ENCODE measurements at regions of chr14 and their contacts with region 1.

Region 1: GRCh38 chr14:93115069-93115820 is 480 bp downstream of the ITPK1 start:
- DNase-seq: peak; percentile 87 to 95
- H3K4me3 ChIP-seq: peak overlapping the region; percentile 48
- H3K4me3 Mint-ChIP-seq: peak overlapping the region; percentile 85
- H3K27ac Mint-ChIP-seq: no peak overlapping the region
- H3K4me1 ChIP-seq: peaks cover 14% of the 10 kb centered on the region
- H3K4me1 Mint-ChIP-seq: peaks cover 16% of the 10 kb centered on the region
- H3K27me3 ChIP-seq: no peaks in the 10 kb centered on the region
- H3K27me3 Mint-ChIP-seq: no peaks in the 10 kb centered on the region
- CTCF ChIP-seq: no peak

Region 2: DNA sequence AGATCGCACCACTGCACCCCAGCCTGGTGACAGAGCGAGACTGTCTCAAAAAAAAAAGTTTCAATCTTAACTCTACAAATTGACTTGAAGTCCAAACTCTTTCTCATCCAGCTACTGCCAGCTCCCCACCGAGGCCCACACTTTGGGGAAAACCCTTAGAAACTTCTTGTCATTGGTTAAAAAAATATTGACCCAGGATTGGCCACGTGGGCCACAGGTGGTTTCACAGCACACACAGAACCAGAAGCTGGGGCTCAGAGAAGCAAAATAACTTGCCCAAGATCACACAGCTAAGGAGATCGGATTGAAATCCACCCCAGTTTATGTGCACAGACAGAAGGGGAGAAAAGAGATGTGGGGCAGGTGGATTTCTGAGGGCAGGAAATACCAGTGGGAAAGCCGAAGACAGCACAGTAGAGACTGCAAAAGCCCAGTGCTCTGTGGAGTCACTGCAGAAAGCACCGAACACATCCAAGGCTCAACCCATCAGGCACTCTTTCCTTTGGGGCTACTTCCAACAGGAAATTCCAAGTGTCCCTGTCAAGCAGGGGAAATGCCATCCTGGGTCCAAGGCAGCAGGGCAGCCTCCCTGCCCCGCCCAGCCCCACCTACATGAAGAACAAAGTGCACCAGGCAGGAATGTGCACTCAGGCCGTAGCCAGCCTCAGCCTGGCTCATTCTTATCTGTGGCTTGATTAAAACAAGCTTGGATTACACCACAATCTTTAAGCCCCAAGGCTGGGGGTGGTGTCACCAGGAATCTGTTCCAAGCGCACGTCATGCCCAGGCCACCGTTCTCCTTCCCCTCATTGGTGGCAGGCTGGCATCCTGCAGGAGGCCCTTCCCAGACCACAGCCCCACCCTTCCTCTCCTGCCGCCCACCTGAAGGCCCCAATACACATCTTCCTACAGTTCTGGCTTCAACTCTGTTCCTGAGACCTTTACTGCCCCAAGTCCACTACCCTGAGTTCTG is 72.0 kb before region 1 on chr14:
- CTCF ChIA-PET with region 1: interaction called, 5 read pairs
- POLR2A ChIA-PET with region 1: interaction called, 10 read pairs
- intact Hi-C with region 1: no loop called
- DNase-seq: peak; percentile 93 to 97
- H3K4me3 ChIP-seq: no peak overlapping the region
- H3K4me3 Mint-ChIP-seq: peak overlapping the region; percentile 54
- H3K27ac Mint-ChIP-seq: peak overlapping the region; percentile 90
- H3K4me1 ChIP-seq: peaks cover 80% of the 10 kb centered on the region
- H3K4me1 Mint-ChIP-seq: peaks cover 49% of the 10 kb centered on the region
- H3K27me3 ChIP-seq: no peaks in the 10 kb centered on the region
- H3K27me3 Mint-ChIP-seq: no peaks in the 10 kb centered on the region
- CTCF ChIP-seq: no peak

Region 3: DNA sequence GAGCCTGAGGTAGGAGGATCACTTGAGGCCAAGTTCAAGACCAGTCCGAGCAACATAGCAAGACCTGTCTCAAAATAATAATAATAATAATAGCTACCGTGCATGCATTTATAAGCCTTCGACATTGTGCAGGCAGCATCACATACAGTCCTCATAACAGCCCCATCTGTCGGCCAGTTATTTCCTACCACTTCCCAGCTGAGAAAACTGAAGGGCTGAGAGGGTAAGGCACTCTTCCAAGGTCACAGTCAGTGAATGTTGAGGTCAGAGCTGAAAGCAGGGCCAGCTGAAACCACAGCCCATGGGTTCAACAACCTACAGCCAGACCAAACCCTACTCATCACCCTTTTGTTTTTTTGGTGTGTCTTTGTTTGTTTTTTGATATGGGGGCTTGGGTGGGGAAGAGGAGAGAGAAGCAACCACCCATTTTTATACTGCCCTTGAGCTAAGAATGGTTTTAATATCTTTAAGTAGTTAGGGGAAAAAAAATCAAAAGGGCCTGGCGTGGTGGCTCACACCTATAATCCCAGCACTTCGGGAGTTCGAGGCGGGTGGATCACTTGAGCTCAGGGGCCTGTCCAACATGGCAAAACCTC is 17.3 kb after region 1 on chr14:
- CTCF ChIA-PET with region 1: interaction called, 20 read pairs
- POLR2A ChIA-PET with region 1: no interaction called
- intact Hi-C with region 1: no loop called
- DNase-seq: no peak
- H3K4me3 ChIP-seq: no peak overlapping the region
- H3K4me3 Mint-ChIP-seq: no peak overlapping the region
- H3K27ac Mint-ChIP-seq: no peak overlapping the region
- H3K4me1 ChIP-seq: no peaks in the 10 kb centered on the region
- H3K4me1 Mint-ChIP-seq: no peaks in the 10 kb centered on the region
- H3K27me3 ChIP-seq: no peaks in the 10 kb centered on the region
- H3K27me3 Mint-ChIP-seq: no peaks in the 10 kb centered on the region
- CTCF ChIP-seq: peak; percentile 21 to 46

Region 4: GRCh38 chr14:93137864-93138263 is 22.6 kb after region 1 on chr14:
- CTCF ChIA-PET with region 1: interaction called, 20 read pairs
- POLR2A ChIA-PET with region 1: no interaction called
- intact Hi-C with region 1: loop called (anchors 1 kb)
- DNase-seq: no peak
- H3K4me3 ChIP-seq: no peak overlapping the region
- H3K4me3 Mint-ChIP-seq: no peak overlapping the region
- H3K27ac Mint-ChIP-seq: no peak overlapping the region
- H3K4me1 ChIP-seq: no peaks in the 10 kb centered on the region
- H3K4me1 Mint-ChIP-seq: peaks cover 6% of the 10 kb centered on the region
- H3K27me3 ChIP-seq: no peaks in the 10 kb centered on the region
- H3K27me3 Mint-ChIP-seq: no peaks in the 10 kb centered on the region
- CTCF ChIP-seq: no peak

Region 5: GRCh38 chr14:93160353-93160801 is 45.1 kb after region 1 on chr14:
- CTCF ChIA-PET with region 1: interaction called, 5 read pairs
- POLR2A ChIA-PET with region 1: no interaction called
- intact Hi-C with region 1: loop called (anchors 1 kb)
- DNase-seq: peak in 1 of 2 experiments; percentile 46
- H3K4me3 ChIP-seq: no peak overlapping the region
- H3K4me3 Mint-ChIP-seq: no peak overlapping the region
- H3K27ac Mint-ChIP-seq: no peak overlapping the region
- H3K4me1 ChIP-seq: no peaks in the 10 kb centered on the region
- H3K4me1 Mint-ChIP-seq: peaks cover 5% of the 10 kb centered on the region
- H3K27me3 ChIP-seq: no peaks in the 10 kb centered on the region
- H3K27me3 Mint-ChIP-seq: no peaks in the 10 kb centered on the region
- CTCF ChIP-seq: peak; percentile 50 to 65

Region 6: DNA sequence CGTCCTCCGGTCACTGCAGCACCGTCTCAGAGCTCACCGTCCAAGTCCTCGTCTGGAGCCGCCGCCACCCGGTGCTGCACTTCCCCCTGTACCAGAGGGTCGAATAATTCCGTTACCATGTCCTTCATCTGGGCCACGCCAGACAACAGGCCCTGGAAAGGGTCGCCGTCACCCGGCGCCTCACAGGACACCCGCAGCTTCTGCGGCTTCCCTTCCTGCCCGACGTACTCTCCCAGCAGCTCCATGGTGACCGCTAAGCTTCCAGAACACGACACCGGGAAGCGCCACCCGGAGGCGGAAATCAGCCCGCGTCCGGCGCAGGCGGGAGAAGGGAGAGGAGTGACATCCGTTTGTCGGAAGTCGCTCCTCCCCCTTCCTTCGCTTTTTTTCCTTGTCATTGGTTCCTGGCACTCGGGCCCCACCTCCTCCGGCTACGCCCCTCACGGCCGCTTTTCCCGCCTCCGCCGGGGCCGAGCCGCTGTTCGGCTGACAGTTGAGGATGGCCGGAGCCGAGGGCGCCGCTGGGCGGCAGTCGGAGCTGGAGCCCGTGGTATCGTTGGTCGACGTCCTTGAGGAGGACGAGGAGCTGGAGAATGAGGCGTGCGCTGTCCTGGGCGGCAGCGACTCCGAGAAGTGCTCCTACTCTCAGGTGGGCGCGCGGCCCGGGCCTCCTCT is 91.7 kb after region 1 on chr14 and contains the starts of genes GON7 and UBR7:
- CTCF ChIA-PET with region 1: interaction called, 9 read pairs
- POLR2A ChIA-PET with region 1: interaction called, 4 read pairs
- intact Hi-C with region 1: loop called (anchors 1 kb)
- DNase-seq: peak; percentile 96 to 97
- H3K4me3 ChIP-seq: peak within 1 kb of the TSS; percentile 98
- H3K4me3 Mint-ChIP-seq: peak within 1 kb of the TSS; percentile 72
- H3K27ac Mint-ChIP-seq: peak within 1 kb of the TSS; percentile 97
- H3K4me1 ChIP-seq: no peaks in the 10 kb centered on the region; the same call in 1 of the 2 replicates
- H3K4me1 Mint-ChIP-seq: no peaks in the 10 kb centered on the region
- H3K27me3 ChIP-seq: no peaks in the 10 kb centered on the region
- H3K27me3 Mint-ChIP-seq: no peaks in the 10 kb centered on the region
- CTCF ChIP-seq: peak; percentile 32 to 39
- total RNA-seq, gene GON7: 7.7 and 10.8 TPM in 2 replicates
- total RNA-seq, gene UBR7: 14.3 and 19.6 TPM in 2 replicates

Region 7: DNA sequence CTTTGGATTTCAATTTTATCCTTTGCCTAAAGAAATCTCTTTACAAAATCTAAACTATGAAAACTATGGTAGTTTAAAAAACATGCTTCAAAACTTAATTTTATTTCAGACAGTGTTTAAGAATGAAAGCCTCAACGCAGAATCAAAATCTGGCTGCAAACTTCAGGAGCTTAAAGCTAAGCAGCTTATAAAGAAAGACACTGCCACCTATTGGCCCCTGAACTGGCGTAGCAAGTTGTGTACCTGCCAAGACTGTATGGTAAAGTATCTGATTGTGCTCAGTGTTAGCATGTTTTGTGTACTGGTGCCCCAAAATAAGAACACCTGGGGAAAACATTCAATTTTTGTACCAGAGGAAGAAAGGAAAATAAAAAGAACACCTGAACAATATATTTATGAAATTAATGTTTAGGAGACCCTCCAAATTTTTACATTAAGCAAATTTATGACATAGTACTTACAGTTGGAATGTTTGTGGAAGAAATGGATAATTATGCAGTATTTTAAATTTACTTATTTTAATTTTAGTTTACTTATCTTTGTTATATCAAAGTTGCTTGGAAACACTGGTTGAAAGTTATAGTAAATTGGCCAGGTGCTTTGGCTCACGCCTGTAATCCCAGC is 104.0 kb after region 1 on chr14:
- CTCF ChIA-PET with region 1: interaction called, 19 read pairs
- POLR2A ChIA-PET with region 1: no interaction called
- intact Hi-C with region 1: loop called (anchors 1 kb)
- DNase-seq: peak; percentile 53 to 58
- H3K4me3 ChIP-seq: no peak overlapping the region
- H3K4me3 Mint-ChIP-seq: no peak overlapping the region
- H3K27ac Mint-ChIP-seq: no peak overlapping the region
- H3K4me1 ChIP-seq: no peaks in the 10 kb centered on the region
- H3K4me1 Mint-ChIP-seq: no peaks in the 10 kb centered on the region
- H3K27me3 ChIP-seq: no peaks in the 10 kb centered on the region
- H3K27me3 Mint-ChIP-seq: no peaks in the 10 kb centered on the region
- CTCF ChIP-seq: peak; percentile 47 to 77

Region 8: DNA sequence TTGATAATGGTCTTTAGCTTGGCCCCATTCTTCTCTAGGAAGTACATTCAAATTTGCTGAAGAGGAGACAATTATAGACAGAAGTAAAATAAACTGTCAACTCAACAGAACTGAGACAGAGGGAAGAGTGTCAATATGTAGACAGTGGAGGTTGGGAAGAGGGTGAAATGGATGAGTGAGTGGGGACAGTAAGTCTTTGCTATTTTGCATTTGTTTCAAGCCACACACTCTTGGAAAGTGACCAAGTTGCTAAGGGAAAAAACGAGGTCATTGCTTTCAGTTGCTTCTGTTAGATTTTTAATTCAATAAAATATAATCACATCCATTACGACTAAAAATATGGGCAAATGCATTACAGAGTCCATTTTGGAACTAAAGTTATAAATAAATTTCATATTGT is 169.8 kb after region 1 on chr14:
- CTCF ChIA-PET with region 1: no interaction called
- POLR2A ChIA-PET with region 1: no interaction called
- intact Hi-C with region 1: no loop called
- DNase-seq: no peak
- H3K4me3 ChIP-seq: no peak overlapping the region
- H3K4me3 Mint-ChIP-seq: no peak overlapping the region
- H3K27ac Mint-ChIP-seq: no peak overlapping the region
- H3K4me1 ChIP-seq: peaks cover 39% of the 10 kb centered on the region
- H3K4me1 Mint-ChIP-seq: peaks cover 25% of the 10 kb centered on the region
- H3K27me3 ChIP-seq: no peaks in the 10 kb centered on the region
- H3K27me3 Mint-ChIP-seq: no peaks in the 10 kb centered on the region
- CTCF ChIP-seq: no peak

Measured in Caco-2 (cell line).